ENCODE measurements at regions of chr16 and their contacts with region 1.

Region 1: DNA sequence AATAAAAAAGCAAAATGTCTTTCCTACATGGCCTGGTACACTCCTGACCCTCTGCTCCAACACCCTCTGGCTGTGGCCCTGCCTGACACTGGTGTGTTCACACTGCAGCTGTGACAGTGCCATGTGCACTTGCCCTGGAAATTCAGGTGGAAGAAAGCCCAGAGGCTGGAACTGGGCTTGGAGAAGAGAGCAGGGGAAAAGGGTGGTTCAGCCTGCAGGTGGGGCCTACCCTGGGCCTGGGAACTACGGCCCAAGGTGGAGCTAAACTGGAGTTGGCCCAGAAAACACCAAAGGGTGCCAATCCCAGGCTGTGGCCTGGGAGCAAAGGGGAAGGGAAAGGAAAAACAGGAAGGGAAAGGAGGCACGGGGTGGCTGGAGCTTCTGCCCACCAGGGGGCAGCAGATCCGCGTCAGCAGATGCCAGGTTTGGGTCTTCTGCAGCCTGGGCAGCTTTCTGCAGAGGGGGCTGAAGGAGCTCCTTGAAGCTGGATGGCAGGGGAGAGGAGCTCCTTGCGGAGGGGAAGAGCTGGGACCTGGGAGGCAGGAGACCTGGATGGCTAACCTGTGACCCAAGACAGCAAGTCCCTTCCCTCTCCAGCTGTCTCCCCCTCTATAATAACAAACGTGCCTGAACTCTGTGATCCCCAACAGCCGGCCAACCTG is 15.4 kb upstream of the CTCF start:
- DNase-seq: peak; percentile 88
- ATAC-seq: peak; percentile 68
- H3K4me3 Mint-ChIP-seq: no peak overlapping the region
- H3K27ac Mint-ChIP-seq: no peak overlapping the region
- H3K4me1 Mint-ChIP-seq: peaks cover 7% of the 10 kb centered on the region
- H3K27me3 Mint-ChIP-seq: peaks cover 12% of the 10 kb centered on the region
- CTCF ChIP-seq: peak; percentile 93

Region 2: DNA sequence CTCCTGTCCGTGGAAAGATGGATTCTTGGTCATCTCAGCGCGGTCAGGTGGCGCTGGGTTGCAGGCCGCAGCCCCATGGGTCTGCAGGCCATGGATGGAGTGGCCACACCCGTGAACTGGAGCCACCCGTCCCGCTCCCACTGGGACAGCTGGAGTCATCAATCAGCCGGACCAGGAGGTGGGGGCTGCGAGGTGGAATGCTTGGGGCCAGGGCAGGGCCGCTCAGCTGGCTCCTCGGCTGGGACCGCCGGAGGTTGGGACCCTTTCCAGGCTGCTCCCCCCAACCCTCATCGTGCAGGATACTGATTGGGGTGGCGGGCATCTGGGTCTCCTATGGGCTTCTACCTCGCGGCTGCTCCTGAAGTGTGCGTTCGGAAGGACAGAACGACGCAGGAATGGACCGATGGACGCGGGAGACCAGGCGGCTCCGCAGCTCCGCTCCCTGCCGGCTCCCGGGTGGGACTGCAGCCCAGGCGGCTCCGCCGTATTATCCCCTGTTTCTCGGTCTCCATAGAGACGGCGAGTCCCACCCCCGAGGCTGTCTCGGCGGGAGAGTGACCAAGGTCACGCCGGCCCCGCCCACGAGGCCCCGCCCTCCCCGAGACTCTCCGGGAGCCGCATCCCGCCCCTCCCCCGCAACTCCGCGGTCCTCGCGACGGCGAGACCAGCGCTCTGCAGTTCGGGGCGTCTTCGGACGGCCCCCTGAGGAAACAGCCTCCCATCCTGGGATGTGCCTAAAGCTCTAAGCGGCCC is 153.7 kb before region 1 on chr16 and contains the start of gene TPPP3:
- CTCF ChIA-PET with region 1: no interaction called
- POLR2A ChIA-PET with region 1: no interaction called
- DNase-seq: peak; percentile 90
- ATAC-seq: peak; percentile 56
- H3K4me3 Mint-ChIP-seq: peak within 1 kb of the TSS; percentile 66
- H3K27ac Mint-ChIP-seq: no peak within 1 kb of the TSS
- H3K4me1 Mint-ChIP-seq: peaks cover 20% of the 10 kb centered on the region
- H3K27me3 Mint-ChIP-seq: peaks cover 56% of the 10 kb centered on the region
- CTCF ChIP-seq: peak; percentile 25; the same call in 1 of the 2 replicates
- total RNA-seq, gene TPPP3: 0.57 to 0.74 TPM (median 0.64 TPM) in 3 replicates

Region 3: DNA sequence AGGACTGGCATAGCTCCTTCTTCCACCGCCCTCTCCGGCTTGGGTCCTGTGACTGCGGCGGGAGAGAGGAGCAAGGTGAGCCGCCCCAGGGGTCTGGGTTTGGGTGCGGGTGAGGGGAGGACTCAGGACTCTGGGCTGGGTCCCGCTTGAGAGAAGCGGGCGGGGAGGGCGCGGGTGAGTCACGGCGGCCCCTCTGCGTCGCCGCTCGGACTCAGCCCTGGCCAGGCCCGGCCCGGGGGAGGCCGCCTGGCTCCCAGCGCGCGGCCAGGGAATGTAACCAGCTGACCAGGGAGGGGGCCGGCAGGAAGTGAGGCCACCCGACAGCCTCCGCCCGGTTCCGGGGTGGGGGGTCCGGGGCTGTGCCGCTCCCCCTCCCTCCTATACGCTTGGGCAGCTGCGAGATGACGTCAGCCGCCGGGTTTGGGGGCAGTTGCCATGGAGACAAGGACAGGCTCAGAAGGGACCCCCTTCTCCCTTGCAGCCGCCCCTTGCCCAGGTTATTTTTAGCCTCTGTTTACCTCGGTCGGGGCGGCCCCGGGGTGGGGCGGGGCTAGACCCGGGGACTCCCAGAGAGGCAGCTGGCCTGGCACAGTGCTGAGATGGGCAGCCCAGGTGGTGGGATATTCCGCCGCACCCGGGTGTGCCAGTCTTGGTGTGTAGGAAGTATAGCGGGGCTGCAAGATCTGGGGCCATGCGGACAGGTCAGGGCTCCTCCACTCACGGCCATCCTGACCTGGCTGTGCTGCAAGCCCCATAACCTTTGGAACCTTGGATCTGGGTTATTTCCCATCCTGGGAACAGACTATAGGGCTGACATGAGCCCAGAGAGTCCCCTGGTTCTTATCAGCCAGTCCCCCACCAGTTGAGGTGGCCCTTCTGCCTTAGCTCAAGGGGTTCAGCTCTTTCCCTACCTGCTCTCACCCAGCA is 16.6 kb before region 1 on chr16:
- CTCF ChIA-PET with region 1: interaction called, 44 read pairs
- POLR2A ChIA-PET with region 1: no interaction called
- DNase-seq: peak; percentile 53
- ATAC-seq: peak; percentile 4
- H3K4me3 Mint-ChIP-seq: peak overlapping the region; percentile 77
- H3K27ac Mint-ChIP-seq: no peak overlapping the region
- H3K4me1 Mint-ChIP-seq: peaks cover 5% of the 10 kb centered on the region
- H3K27me3 Mint-ChIP-seq: peaks cover 94% of the 10 kb centered on the region
- CTCF ChIP-seq: no peak

Region 4: DNA sequence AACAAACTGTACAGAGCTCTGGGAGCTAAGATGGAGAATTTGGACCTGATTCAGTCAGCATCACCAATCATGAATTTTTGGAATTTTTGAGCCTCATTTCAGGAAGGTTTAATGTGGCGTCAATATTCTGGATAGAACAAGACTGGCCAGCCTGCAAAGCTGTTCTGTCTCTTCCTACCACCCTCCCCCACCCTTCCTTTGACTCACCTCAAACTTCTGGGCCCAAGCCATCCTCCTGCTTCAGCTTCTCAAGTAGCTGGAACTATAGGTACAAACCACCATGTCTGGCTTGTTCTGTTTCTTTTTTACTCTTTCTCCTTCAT is 48.1 kb after region 1 on chr16:
- CTCF ChIA-PET with region 1: interaction called, 11 read pairs
- POLR2A ChIA-PET with region 1: no interaction called
- DNase-seq: no peak
- ATAC-seq: peak; percentile 38
- H3K4me3 Mint-ChIP-seq: peak overlapping the region; percentile 43
- H3K27ac Mint-ChIP-seq: peak overlapping the region; percentile 89
- H3K4me1 Mint-ChIP-seq: peaks cover 54% of the 10 kb centered on the region
- H3K27me3 Mint-ChIP-seq: no peaks in the 10 kb centered on the region
- CTCF ChIP-seq: no peak

Region 5: DNA sequence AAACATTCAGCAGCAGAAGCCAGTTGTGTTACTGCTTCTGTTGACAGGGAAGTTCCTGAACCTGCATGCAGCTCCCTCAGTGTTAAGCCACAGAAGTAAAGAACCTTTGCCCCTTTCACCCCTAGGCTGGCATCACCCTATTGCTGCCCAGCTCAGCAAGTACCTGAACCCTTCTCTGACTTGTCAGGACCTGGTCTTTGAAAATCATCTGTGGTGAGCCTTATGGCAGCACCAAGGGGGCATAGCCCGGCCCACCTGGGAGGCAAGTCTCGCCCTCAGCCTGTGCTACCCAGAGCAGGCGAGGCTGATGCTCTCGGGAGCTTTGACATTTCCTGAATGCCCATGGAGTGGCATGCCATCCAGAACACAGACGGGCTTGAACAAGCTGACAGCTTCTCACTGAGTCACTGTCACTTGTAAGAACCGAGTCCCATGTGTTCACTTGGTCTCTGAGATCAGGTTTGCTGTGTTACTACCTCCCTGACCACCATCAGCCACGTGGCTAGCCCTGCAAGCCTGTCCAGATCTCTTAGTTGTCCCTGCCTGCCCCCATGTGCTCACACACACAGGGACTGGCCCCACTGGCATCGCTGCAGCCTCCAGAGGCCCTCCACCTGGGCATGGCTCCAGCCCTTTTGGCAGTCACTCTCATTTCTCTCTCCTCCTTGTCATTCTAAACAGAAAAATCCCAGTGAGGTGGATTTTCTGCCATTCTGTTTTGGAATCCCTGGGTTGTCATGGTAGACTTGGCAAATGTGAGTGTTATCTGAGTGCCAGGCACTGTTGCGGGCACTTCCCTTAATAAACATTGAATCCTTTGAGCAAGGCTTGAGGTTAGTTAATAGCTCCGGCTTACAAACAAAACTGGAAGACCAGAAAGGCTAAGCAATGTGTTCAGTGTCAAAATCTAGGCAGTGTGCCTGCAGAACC is 95.2 kb after region 1 on chr16:
- CTCF ChIA-PET with region 1: interaction called, 197 read pairs
- POLR2A ChIA-PET with region 1: interaction called, 4 read pairs
- DNase-seq: no peak
- ATAC-seq: no peak
- H3K4me3 Mint-ChIP-seq: no peak overlapping the region
- H3K27ac Mint-ChIP-seq: no peak overlapping the region
- H3K4me1 Mint-ChIP-seq: no peaks in the 10 kb centered on the region; the same call in 1 of the 2 replicates
- H3K27me3 Mint-ChIP-seq: peaks cover 26% of the 10 kb centered on the region
- CTCF ChIP-seq: no peak

Region 6: DNA sequence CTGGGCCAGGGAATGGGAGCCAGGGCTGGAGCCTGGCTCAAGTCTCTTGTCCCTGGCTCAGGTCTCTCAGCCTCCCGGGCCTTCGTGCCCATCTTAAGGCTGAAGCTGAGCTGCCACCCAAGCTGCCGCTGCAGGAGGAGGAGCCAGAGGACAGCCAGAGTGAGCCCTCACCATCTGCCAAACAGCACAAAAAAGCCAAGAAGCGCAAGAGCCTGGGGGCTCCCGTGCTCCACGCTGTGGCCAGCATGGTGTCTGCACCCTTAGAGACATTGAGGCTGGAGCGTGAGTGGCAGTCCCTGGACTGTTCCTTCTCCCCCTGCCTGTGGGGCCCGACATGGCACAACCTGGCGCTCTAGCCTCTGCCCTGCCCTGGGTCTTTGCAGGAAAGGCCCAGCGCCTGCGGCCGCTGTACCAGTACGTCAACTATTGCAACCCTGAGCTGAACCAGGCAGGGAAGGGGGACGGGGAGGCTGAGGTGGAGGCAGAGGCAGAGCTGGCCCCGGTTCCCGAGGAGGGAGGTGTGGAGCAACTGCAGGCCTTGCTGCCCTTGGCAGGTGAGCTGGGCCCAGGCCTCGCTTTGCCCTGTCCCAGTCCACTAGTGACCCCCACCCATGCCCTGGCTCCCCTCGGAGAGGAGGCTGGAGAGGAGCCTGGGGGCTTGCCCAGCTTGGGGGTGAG is 121.1 kb after region 1 on chr16:
- CTCF ChIA-PET with region 1: interaction called, 137 read pairs
- POLR2A ChIA-PET with region 1: no interaction called
- DNase-seq: peak; percentile 82
- ATAC-seq: peak; percentile 66
- H3K4me3 Mint-ChIP-seq: peak overlapping the region; percentile 84; the same call in 1 of the 2 replicates
- H3K27ac Mint-ChIP-seq: no peak overlapping the region
- H3K4me1 Mint-ChIP-seq: peaks cover 11% of the 10 kb centered on the region
- H3K27me3 Mint-ChIP-seq: peaks cover 6% of the 10 kb centered on the region
- CTCF ChIP-seq: no peak